ENCODE measurements at regions of chr17 and their contacts with region 1.

Region 1: GRCh38 chr17:75707131-75707571 is 14.1 kb upstream of the ITGB4 start:
- DNase-seq: no peak
- H3K4me3 ChIP-seq: no peak overlapping the region
- H3K4me3 Mint-ChIP-seq: no peak overlapping the region
- H3K27ac ChIP-seq: no peak overlapping the region
- H3K27ac Mint-ChIP-seq: peak overlapping the region in 3 of 7 donors; percentile 1 to 84 (median 74)
- H3K4me1 ChIP-seq: no peaks in the 10 kb centered on the region
- H3K4me1 Mint-ChIP-seq: no peaks in the 10 kb centered on the region
- H3K27me3 ChIP-seq: no peaks in the 10 kb centered on the region
- H3K27me3 Mint-ChIP-seq: peaks cover 0 to 2% (median 2%) of the 10 kb centered on the region in 3 donors
- CTCF ChIP-seq: no peak

Region 2: DNA sequence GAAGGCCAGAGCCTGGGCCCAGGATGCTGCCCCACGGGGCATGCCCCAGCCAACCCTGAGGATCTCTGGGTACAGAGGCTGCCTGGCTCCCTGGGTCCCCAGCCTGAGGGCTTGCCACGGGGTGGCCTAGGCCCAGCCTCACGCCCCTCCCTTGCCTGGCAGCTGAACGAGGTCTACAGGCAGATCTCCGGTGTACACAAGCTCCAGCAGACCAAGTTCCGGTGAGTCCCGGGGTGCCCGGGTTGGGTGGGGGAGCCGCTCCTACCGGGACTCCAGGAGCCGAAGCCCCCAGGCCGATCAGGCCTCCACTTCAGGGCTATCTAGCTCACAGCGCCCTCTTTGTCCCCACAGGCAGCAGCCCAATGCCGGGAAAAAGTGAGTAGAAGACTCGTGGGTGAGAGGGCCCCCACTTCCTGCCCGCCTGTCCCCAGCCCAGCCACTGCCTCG is 33.5 kb after region 1 on chr17:
- intact Hi-C with region 1: loop called in 1 of 2 experiments (anchors 5 kb)
- DNase-seq: no peak
- H3K4me3 ChIP-seq: no peak overlapping the region
- H3K4me3 Mint-ChIP-seq: no peak overlapping the region
- H3K27ac ChIP-seq: no peak overlapping the region
- H3K27ac Mint-ChIP-seq: no peak overlapping the region
- H3K4me1 ChIP-seq: peaks cover 20 to 24% of the 10 kb centered on the region in 2 donors
- H3K4me1 Mint-ChIP-seq: peaks cover 23% of the 10 kb centered on the region
- H3K27me3 ChIP-seq: no peaks in the 10 kb centered on the region
- H3K27me3 Mint-ChIP-seq: no peaks in the 10 kb centered on the region
- CTCF ChIP-seq: no peak

Region 3: GRCh38 chr17:75753514-75754377 is 46.6 kb after region 1 on chr17:
- intact Hi-C with region 1: no loop called
- DNase-seq: peak in 2 of 3 donors; percentile 57 to 64
- H3K4me3 ChIP-seq: peak overlapping the region in 2 of 3 experiments; percentile 34 to 71
- H3K4me3 Mint-ChIP-seq: peak overlapping the region; percentile 45 to 69
- H3K27ac ChIP-seq: no peak overlapping the region
- H3K27ac Mint-ChIP-seq: no peak overlapping the region
- H3K4me1 ChIP-seq: peaks cover 26 to 38% of the 10 kb centered on the region in 2 donors
- H3K4me1 Mint-ChIP-seq: peaks cover 32% of the 10 kb centered on the region
- H3K27me3 ChIP-seq: peaks cover 0 to 4% of the 10 kb centered on the region in 2 donors
- H3K27me3 Mint-ChIP-seq: peaks cover 7 to 18% (median 7%) of the 10 kb centered on the region in 3 donors
- CTCF ChIP-seq: peak; percentile 80

Region 4: GRCh38 chr17:75764711-75765421 is 57.7 kb after region 1 on chr17 and contains the start of gene GALK1:
- intact Hi-C with region 1: no loop called
- DNase-seq: peak; percentile 69 to 81 (median 79)
- H3K4me3 ChIP-seq: peak within 1 kb of the TSS; percentile 49 to 91 (median 71)
- H3K4me3 Mint-ChIP-seq: peak within 1 kb of the TSS; percentile 79 to 86
- H3K27ac ChIP-seq: peak within 1 kb of the TSS; percentile 36 to 75
- H3K27ac Mint-ChIP-seq: peak within 1 kb of the TSS; percentile 68 to 87 (median 80)
- H3K4me1 ChIP-seq: peaks cover 14 to 23% of the 10 kb centered on the region in 2 donors
- H3K4me1 Mint-ChIP-seq: peaks cover 11% of the 10 kb centered on the region
- H3K27me3 ChIP-seq: no peaks in the 10 kb centered on the region
- H3K27me3 Mint-ChIP-seq: peaks cover 0 to 2% (median 0%) of the 10 kb centered on the region in 3 donors
- CTCF ChIP-seq: peak; percentile 83
- polyA plus RNA-seq, gene GALK1: 44.8 to 108 (median 84.3) TPM